ENCODE measurements at regions of chr1 and their contacts with region 1.

Region 1: DNA sequence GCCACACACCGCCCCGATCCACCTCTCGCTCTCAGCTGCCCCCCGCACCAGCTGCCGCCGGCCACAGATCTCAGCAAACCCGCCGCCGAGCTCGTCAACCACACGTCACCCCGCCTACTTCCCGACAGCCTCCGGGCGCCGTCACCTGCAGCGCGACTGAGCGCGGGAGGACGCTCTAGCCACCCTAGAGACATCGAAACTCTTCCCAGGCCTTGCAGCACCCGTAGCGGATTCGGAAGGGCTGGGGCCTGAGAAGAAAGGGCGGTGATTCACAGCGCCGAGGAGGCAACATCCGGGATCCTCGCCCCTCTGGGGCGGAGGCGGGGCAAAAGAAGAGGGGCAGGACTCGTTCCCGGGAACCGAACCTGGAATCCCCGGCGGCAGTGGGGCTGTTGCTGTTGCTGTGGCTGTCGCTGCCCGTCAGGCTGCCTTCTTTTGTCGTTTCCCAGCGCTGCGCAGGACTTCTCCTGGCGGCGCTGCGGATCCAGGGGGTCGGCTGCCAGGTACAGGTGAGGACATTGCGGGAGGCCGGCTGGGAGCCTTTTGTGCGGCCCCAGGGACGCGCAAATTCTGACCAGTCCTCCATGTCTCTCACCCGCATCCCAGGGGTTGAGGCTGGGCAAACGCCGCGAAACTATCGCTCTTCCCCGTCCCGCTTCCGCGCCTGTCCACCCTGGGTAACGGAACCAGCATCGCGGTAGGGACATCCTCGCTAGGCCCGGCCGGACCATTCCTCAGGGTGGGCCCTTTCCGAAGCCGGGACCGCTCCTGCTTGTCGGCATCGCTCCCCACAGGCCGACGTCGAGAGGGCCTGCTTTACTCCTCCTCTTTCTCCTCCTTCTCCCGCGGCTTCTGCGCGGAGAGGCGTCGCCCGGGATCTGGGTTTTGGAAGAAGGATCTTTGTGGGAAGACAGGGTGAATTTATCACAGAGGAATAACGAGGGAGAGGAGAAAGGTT is at the starts of genes RO60 and UCHL5:
- DNase-seq: peak; percentile 100
- H3K4me3 Mint-ChIP-seq: peak within 1 kb of the TSS; percentile 87
- H3K27ac Mint-ChIP-seq: peak within 1 kb of the TSS; percentile 97
- H3K4me1 Mint-ChIP-seq: peaks cover 38% of the 10 kb centered on the region
- H3K27me3 Mint-ChIP-seq: no peaks in the 10 kb centered on the region
- CTCF ChIP-seq: no peak
- total RNA-seq, gene RO60: 128 and 135 TPM in 2 replicates
- total RNA-seq, gene UCHL5: 79.2 and 94.4 TPM in 2 replicates

Region 2: DNA sequence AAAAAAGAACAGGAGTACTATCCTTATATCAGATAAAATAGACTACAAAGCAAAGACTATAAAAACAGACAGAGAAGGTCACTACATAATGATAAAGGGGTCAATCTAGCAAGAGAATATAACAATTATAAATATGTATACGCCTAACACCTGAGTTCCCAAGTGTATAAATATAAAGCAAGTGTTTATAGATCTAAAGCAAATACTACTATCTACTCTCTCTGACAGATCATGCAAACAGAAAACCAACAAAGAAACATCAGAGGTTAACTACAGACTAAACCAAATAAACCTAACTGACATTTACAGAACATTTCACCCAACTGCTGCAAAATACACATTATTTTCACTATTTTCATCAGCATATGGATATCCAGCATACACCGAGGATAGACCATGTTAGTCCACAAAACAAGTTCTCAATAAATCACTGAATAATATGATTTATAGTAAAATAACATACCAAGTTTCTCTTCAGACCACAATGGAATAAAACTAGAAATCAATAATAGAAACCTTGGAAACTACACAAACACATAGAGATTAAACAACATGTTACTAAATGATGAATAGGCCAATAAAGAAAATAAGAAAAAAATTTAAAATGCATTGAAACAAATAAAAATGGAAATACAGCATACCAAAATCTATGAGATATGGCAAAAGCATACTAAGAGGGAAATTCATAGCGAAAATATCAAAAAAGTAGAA is 23.1 kb before region 1 on chr1:
- CTCF ChIA-PET with region 1: interaction called, 5 read pairs
- POLR2A ChIA-PET with region 1: interaction called, 21 read pairs
- intact Hi-C with region 1: no loop called
- DNase-seq: no peak
- H3K4me3 Mint-ChIP-seq: no peak overlapping the region
- H3K27ac Mint-ChIP-seq: no peak overlapping the region
- H3K4me1 Mint-ChIP-seq: peaks cover 9% of the 10 kb centered on the region
- H3K27me3 Mint-ChIP-seq: no peaks in the 10 kb centered on the region
- CTCF ChIP-seq: no peak

Region 3: DNA sequence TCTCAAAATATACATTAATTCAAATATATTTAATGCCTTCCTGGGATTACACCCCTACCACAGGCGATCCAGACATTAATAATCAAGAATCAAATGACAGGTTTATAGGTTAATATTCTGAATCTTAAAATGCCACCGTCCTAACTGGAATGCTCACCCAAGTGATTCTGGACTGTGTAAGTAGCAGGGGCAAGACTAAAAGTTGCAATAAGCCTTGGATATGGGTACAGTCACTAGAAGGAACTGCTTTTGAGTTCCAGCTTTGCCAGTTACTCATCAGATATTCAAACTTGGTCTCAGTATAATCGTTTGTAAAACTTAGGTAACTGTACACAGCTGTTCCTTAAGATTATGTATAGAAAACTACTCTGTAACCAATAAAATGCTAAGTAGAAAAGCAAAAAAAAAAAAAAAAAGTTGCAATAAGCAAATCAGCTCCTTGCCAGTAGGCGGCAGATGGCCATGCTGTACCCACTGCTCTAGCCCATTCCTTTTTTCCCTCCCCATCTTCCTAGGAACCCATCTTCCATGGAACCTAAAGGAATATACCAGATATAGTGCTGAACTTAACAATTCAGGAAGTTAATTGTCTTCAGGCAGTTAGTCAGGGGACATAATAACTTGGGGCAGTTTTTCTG is 10.3 kb after region 1 on chr1:
- CTCF ChIA-PET with region 1: interaction called, 5 read pairs
- POLR2A ChIA-PET with region 1: interaction called, 21 read pairs
- intact Hi-C with region 1: no loop called
- DNase-seq: peak; percentile 50
- H3K4me3 Mint-ChIP-seq: no peak overlapping the region
- H3K27ac Mint-ChIP-seq: no peak overlapping the region
- H3K4me1 Mint-ChIP-seq: peaks cover 13% of the 10 kb centered on the region
- H3K27me3 Mint-ChIP-seq: no peaks in the 10 kb centered on the region
- CTCF ChIP-seq: peak; percentile 28

Region 4: DNA sequence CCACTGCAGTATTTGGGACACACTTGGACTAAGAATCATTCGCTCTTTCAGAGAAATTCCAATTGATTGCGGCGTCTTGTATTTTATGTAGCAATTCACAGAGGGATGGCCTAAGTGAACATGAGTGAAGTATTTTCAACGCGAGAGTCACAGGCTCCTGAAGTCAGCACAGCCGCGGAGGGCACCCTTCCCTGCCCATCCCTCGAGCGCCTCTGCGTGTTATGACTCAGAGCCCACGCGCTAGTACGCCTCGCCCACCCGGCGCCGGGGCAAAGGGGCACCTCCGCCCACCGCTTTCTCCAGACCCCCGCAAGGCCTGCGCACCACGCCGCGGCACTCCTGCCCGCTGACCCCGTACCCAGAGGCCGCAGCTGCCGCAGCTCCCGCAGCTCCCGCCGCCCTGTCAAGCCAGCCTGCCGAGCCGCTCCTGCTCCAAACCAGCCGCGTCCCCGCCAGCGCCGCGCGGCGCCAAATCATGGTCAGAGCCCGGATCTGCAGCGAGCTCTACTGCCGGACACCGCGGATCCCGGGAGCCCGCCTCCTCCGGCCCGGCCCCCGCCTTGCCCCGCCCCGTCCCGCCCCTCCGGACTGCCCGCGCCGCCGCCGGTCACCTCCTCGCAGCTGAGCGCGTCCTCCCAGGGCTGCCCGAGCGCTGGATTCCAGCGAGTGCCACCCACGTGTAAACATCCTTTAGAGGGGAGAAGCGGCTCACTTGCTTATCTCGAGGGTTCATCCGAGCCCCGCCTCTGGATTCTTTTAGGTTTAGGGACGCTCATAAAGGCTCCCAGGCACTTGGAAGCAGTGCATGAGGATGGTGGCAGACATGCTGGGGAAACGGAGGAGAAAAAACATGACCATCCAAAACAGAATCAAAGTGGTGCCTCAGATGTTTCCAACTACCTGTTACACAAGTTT is 45.6 kb after region 1 on chr1 and contains the start of gene GLRX2:
- CTCF ChIA-PET with region 1: interaction called, 6 read pairs
- POLR2A ChIA-PET with region 1: interaction called, 81 read pairs
- intact Hi-C with region 1: loop called (anchors 1 kb)
- DNase-seq: peak; percentile 90
- H3K4me3 Mint-ChIP-seq: peak within 1 kb of the TSS; percentile 91
- H3K27ac Mint-ChIP-seq: peak within 1 kb of the TSS; percentile 89
- H3K4me1 Mint-ChIP-seq: peaks cover 20% of the 10 kb centered on the region
- H3K27me3 Mint-ChIP-seq: no peaks in the 10 kb centered on the region
- CTCF ChIP-seq: no peak
- total RNA-seq, gene GLRX2: 59.8 and 74.2 TPM in 2 replicates

Region 5: GRCh38 chr1:193121616-193122593 is 62.4 kb after region 1 on chr1 and contains the start of gene CDC73:
- CTCF ChIA-PET with region 1: interaction called, 7 read pairs
- POLR2A ChIA-PET with region 1: interaction called, 48 read pairs
- intact Hi-C with region 1: loop called (anchors 1 kb)
- DNase-seq: peak; percentile 99
- H3K4me3 Mint-ChIP-seq: peak within 1 kb of the TSS; percentile 91
- H3K27ac Mint-ChIP-seq: peak within 1 kb of the TSS; percentile 88
- H3K4me1 Mint-ChIP-seq: peaks cover 20% of the 10 kb centered on the region
- H3K27me3 Mint-ChIP-seq: no peaks in the 10 kb centered on the region
- CTCF ChIP-seq: peak; percentile 99
- total RNA-seq, gene CDC73: 79.8 and 85.8 TPM in 2 replicates